CD4-positive, alpha-beta memory T cell (primary cell): ENCODE measurements at regions of chr2 and their contacts with region 1.

Region 1: DNA sequence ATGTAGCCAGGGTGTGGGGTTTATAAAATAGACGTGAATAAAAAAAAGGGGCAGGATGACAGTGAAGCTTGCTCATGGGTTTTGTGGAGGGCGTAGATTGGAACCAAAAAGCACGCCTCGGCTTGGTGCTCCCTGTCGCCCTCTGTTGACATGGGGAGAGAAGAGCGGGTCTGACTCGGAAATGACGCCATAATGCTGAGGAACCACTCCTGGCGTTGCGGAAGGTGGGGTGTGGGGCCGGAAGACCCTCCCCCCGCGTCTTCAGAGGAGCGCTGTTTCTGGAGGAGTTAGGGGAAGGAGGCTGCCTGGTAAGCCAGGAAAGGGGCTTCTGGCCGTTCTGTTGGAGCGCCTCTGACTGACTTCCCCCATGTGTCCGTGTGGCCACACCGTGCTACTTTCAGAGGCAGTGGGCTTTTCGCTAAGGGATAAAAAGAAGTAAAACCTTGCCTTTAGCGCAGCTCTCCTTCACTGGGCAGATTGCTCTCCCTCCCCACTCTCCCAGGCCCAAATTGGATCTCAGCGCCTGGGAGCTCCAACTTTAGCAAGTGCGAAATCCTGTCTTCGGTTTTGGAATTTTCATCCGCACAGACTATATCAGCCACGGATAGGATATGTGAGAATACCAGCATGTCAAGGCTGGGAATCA is 42.8 kb downstream of the PLEKHA3 start:
- DNase-seq: peak; percentile 77 to 89 (median 83)
- H3K4me3 ChIP-seq: peak overlapping the region; percentile 63 to 90
- H3K4me3 Mint-ChIP-seq: peak overlapping the region; percentile 91 to 96 (median 93)
- H3K27ac ChIP-seq: peak overlapping the region; percentile 70
- H3K27ac Mint-ChIP-seq: peak overlapping the region; percentile 79 to 94 (median 93)
- H3K4me1 ChIP-seq: peaks cover 24% of the 10 kb centered on the region
- H3K4me1 Mint-ChIP-seq: peaks cover 25 to 61% (median 37%) of the 10 kb centered on the region in 4 donors
- H3K27me3 ChIP-seq: no peaks in the 10 kb centered on the region
- H3K27me3 Mint-ChIP-seq: no peaks in the 10 kb centered on the region

Region 2: GRCh38 chr2:177552422-177553175 is 970.5 kb before region 1 on chr2:
- CTCF ChIA-PET with region 1: no interaction called
- POLR2A ChIA-PET with region 1: no interaction called
- intact Hi-C with region 1: loop called (anchors 10 kb)
- DNase-seq: peak; percentile 94 to 96 (median 96)
- H3K4me3 ChIP-seq: peak overlapping the region; percentile 57 to 90
- H3K4me3 Mint-ChIP-seq: peak overlapping the region; percentile 95 to 99 (median 98)
- H3K27ac ChIP-seq: peak overlapping the region; percentile 97
- H3K27ac Mint-ChIP-seq: peak overlapping the region; percentile 98 to 100 (median 100)
- H3K4me1 ChIP-seq: peaks cover 9% of the 10 kb centered on the region
- H3K4me1 Mint-ChIP-seq: peaks cover 6 to 20% (median 8%) of the 10 kb centered on the region in 4 donors
- H3K27me3 ChIP-seq: no peaks in the 10 kb centered on the region
- H3K27me3 Mint-ChIP-seq: peaks cover 3 to 4% of the 10 kb centered on the region in 2 donors

Region 3: GRCh38 chr2:178397002-178397605 is 126.0 kb before region 1 on chr2:
- CTCF ChIA-PET with region 1: interaction called, 5 read pairs
- POLR2A ChIA-PET with region 1: no interaction called
- intact Hi-C with region 1: loop called (anchors 2 kb)
- DNase-seq: peak in 4 of 5 donors; percentile 32 to 47 (median 37)
- H3K4me3 ChIP-seq: no peak overlapping the region
- H3K4me3 Mint-ChIP-seq: no peak overlapping the region
- H3K27ac ChIP-seq: no peak overlapping the region
- H3K27ac Mint-ChIP-seq: no peak overlapping the region
- H3K4me1 ChIP-seq: no peaks in the 10 kb centered on the region
- H3K4me1 Mint-ChIP-seq: no peaks in the 10 kb centered on the region
- H3K27me3 ChIP-seq: no peaks in the 10 kb centered on the region
- H3K27me3 Mint-ChIP-seq: peaks cover 0 to 3% of the 10 kb centered on the region in 2 donors

Region 4: GRCh38 chr2:178420463-178420999 is 102.5 kb before region 1 on chr2:
- CTCF ChIA-PET with region 1: no interaction called
- POLR2A ChIA-PET with region 1: no interaction called
- intact Hi-C with region 1: no loop called
- DNase-seq: no peak
- H3K4me3 ChIP-seq: no peak overlapping the region
- H3K4me3 Mint-ChIP-seq: no peak overlapping the region
- H3K27ac ChIP-seq: no peak overlapping the region
- H3K27ac Mint-ChIP-seq: peak overlapping the region in 1 of 7 donors; percentile 28
- H3K4me1 ChIP-seq: no peaks in the 10 kb centered on the region
- H3K4me1 Mint-ChIP-seq: peaks cover 0 to 5% (median 0%) of the 10 kb centered on the region in 4 donors
- H3K27me3 ChIP-seq: no peaks in the 10 kb centered on the region
- H3K27me3 Mint-ChIP-seq: no peaks in the 10 kb centered on the region

Region 5: GRCh38 chr2:178450774-178451525 is 72.1 kb before region 1 on chr2 and contains the starts of genes PJVK and PRKRA:
- CTCF ChIA-PET with region 1: interaction called, 5 read pairs
- POLR2A ChIA-PET with region 1: interaction called, 6 read pairs
- intact Hi-C with region 1: loop called (anchors 1 kb)
- DNase-seq: peak; percentile 93 to 95 (median 94)
- H3K4me3 ChIP-seq: peak within 1 kb of the TSS; percentile 40 to 76
- H3K4me3 Mint-ChIP-seq: peak within 1 kb of the TSS; percentile 87 to 93 (median 90)
- H3K27ac ChIP-seq: peak within 1 kb of the TSS; percentile 97
- H3K27ac Mint-ChIP-seq: peak within 1 kb of the TSS; percentile 94 to 97 (median 97)
- H3K4me1 ChIP-seq: peaks cover 32% of the 10 kb centered on the region
- H3K4me1 Mint-ChIP-seq: peaks cover 21 to 34% (median 27%) of the 10 kb centered on the region in 4 donors
- H3K27me3 ChIP-seq: no peaks in the 10 kb centered on the region
- H3K27me3 Mint-ChIP-seq: peaks cover 2 to 3% of the 10 kb centered on the region in 2 donors
- total RNA-seq, gene PJVK: 3.6 to 4.1 TPM
- total RNA-seq, gene PRKRA: 51.0 to 52.4 TPM

Region 6: DNA sequence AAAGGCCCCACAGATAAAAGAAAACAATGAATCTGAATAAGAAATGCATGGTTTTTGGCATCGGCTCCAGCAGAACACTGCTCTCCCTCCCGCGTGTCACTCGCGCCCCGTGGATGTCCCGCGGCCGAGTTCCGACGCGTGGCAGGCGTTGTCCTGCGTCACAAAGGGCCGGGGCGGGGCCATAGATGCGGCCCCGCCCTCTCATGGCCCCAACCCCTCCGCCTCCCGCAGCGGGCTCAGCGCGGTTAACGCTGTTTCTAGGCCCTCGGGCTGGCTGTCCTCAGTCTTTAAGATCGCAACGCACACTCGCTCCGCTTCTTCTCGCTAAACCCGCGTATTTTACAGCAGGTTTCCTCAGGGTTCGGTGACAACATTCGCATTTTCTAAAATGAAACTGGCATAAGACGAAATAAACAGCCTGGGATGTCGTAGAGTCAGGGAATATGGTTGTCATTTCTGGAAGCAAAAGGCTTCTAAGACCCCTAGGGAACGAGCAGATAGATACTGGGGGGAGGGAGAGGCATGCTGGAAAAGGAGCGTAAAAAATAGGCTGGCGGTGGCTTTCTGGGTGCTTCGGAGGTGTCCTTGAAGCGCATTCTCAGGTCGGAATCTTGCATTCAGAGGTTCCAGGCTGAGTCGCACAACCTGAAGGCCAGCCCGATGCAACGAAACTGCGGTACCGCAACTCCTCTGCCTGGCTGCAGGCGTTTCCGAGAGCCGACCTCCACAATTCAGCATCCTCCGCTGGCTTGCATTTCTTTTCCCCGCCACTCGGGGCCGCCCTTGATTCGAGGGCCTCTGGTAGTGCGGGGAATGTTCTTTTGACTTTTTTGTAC is 44.4 kb before region 1 on chr2 and contains the start of gene FKBP7:
- CTCF ChIA-PET with region 1: interaction called, 10 read pairs
- POLR2A ChIA-PET with region 1: interaction called, 4 read pairs
- intact Hi-C with region 1: loop called (anchors 1 kb)
- DNase-seq: peak; percentile 80 to 88 (median 83)
- H3K4me3 ChIP-seq: peak within 1 kb of the TSS; percentile 96 to 100
- H3K4me3 Mint-ChIP-seq: peak within 1 kb of the TSS; percentile 96 to 100 (median 99)
- H3K27ac ChIP-seq: peak within 1 kb of the TSS; percentile 81
- H3K27ac Mint-ChIP-seq: peak within 1 kb of the TSS; percentile 96 to 100 (median 99)
- H3K4me1 ChIP-seq: peaks cover 41% of the 10 kb centered on the region
- H3K4me1 Mint-ChIP-seq: peaks cover 33 to 50% (median 39%) of the 10 kb centered on the region in 4 donors
- H3K27me3 ChIP-seq: no peaks in the 10 kb centered on the region
- H3K27me3 Mint-ChIP-seq: no peaks in the 10 kb centered on the region
- total RNA-seq, gene FKBP7: 0.79 to 0.80 TPM

Region 7: GRCh38 chr2:178496049-178496448 is 27.0 kb before region 1 on chr2:
- CTCF ChIA-PET with region 1: interaction called, 11 read pairs
- POLR2A ChIA-PET with region 1: no interaction called
- intact Hi-C with region 1: no loop called
- DNase-seq: no peak
- H3K4me3 ChIP-seq: no peak overlapping the region
- H3K4me3 Mint-ChIP-seq: no peak overlapping the region
- H3K27ac ChIP-seq: no peak overlapping the region
- H3K27ac Mint-ChIP-seq: no peak overlapping the region
- H3K4me1 ChIP-seq: no peaks in the 10 kb centered on the region
- H3K4me1 Mint-ChIP-seq: peaks cover 0 to 3% (median under 1%) of the 10 kb centered on the region in 4 donors
- H3K27me3 ChIP-seq: no peaks in the 10 kb centered on the region
- H3K27me3 Mint-ChIP-seq: no peaks in the 10 kb centered on the region